ENCODE measurements at regions of chr20 and their contacts with region 1.

Region 1: GRCh38 chr20:32031007-32031958 is 20.8 kb upstream of the HCK start:
- DNase-seq: peak; percentile 82
- H3K4me3 Mint-ChIP-seq: no peak overlapping the region
- H3K27ac Mint-ChIP-seq: no peak overlapping the region
- H3K4me1 Mint-ChIP-seq: peaks cover 4% of the 10 kb centered on the region
- H3K27me3 Mint-ChIP-seq: peaks cover 46% of the 10 kb centered on the region
- CTCF ChIP-seq: peak; percentile 93

Region 2: DNA sequence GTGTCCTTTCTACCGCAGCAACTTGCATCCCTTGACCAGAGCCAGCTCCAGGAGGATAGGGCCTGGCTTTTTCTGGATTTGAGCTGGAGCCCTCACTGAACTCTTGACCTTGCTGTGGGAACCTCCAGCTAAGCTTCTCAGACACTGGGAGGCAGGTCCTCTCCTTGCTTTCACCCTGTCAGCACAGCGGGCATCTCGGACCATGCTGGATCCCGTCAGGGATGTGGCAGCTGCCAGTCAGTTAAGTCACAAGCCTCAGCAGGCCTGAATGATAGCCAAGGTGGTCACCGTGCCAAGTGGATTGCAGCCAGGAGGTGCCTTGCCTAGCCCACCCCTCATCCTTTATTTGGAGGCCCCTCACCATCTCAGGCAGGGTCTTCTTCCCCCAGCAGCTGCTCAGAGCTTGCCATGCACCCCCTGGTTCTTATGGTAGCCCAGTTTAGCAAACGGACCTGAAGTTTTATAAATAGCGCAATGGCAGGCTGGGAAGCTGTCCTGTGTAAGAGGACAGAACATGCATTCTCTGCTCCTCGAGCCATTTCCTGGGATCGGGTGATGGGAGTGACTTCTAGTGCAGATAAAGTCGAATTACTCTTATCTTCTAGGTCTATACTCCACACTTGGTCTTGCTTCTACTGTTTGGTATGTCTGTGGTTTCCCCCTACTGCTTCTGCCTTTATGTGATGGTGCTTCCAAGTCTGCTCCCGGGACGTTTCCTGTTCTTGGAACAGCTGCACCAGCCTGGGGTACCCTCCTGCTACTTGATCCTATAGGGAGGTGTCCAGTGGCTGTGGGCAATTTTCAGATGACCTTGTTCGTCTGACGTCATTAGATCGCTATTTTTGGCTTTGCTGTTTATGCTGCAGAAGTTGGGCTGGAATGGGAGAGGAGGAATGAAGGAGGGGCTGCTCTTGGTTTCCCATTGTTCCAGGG is 219.2 kb before region 1 on chr20:
- CTCF ChIA-PET with region 1: interaction called, 45 read pairs
- POLR2A ChIA-PET with region 1: no interaction called
- intact Hi-C with region 1: no loop called
- DNase-seq: no peak
- H3K4me3 Mint-ChIP-seq: no peak overlapping the region
- H3K27ac Mint-ChIP-seq: no peak overlapping the region
- H3K4me1 Mint-ChIP-seq: no peaks in the 10 kb centered on the region
- H3K27me3 Mint-ChIP-seq: no peaks in the 10 kb centered on the region
- CTCF ChIP-seq: no peak

Region 3: DNA sequence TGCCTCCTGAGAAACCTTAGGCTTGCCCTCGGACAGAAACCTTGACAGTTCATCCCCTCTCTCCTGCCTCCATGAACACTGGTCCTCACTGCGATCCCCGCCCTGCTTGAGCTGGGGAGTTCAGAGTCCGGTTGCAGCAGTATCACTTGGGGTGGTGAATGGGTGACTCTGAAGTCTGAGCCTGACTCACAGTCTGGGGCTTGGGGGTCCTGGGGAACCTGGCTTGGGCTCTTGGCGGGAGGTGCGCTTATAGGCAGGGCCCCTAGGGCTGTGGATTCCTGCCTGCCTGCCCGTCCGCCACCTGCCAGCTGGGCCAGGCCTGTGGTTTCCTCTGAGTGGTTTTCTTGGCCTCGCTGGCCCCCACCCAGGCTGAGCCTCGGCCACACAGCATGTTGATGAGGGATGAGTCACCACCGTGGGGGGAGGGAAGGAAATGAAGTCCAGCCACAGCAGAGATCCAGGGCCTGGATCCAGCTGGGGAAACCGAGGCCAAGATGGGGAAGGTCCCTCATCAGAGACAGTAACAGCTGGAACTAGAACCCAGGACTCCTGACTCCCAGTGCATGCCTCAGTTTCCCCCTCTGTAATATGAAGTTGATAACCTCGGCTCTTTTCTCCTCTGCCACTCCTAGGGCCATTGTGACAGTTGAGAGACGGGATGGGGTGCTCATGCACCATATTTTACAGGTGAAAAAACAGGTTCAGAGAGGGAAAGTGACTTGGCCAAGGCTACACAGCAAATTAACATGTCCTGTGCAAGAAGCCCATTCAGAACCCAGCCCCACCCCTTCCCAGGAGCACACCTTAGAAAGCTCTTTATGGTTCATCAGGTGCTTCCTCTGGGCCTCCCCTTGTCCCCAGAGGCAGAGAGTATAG is 195.1 kb before region 1 on chr20:
- CTCF ChIA-PET with region 1: interaction called, 25 read pairs
- POLR2A ChIA-PET with region 1: no interaction called
- intact Hi-C with region 1: no loop called
- DNase-seq: peak; percentile 93
- H3K4me3 Mint-ChIP-seq: no peak overlapping the region
- H3K27ac Mint-ChIP-seq: no peak overlapping the region
- H3K4me1 Mint-ChIP-seq: peaks cover 6% of the 10 kb centered on the region
- H3K27me3 Mint-ChIP-seq: no peaks in the 10 kb centered on the region
- CTCF ChIP-seq: no peak

Region 4: GRCh38 chr20:31869942-31870725 is 161.1 kb before region 1 on chr20 and contains the starts of genes DUSP15 and TTLL9:
- CTCF ChIA-PET with region 1: interaction called, 24 read pairs
- POLR2A ChIA-PET with region 1: no interaction called
- intact Hi-C with region 1: no loop called
- DNase-seq: no peak
- H3K4me3 Mint-ChIP-seq: peak within 1 kb of the TSS; percentile 77
- H3K27ac Mint-ChIP-seq: peak within 1 kb of the TSS; percentile 81
- H3K4me1 Mint-ChIP-seq: peaks cover 7% of the 10 kb centered on the region
- H3K27me3 Mint-ChIP-seq: peaks cover 67% of the 10 kb centered on the region
- CTCF ChIP-seq: no peak
- total RNA-seq, gene DUSP15: not detected in 2 replicates
- total RNA-seq, gene TTLL9: 0.19 TPM in 1 of 2 replicates, not detected in the other

Region 5: DNA sequence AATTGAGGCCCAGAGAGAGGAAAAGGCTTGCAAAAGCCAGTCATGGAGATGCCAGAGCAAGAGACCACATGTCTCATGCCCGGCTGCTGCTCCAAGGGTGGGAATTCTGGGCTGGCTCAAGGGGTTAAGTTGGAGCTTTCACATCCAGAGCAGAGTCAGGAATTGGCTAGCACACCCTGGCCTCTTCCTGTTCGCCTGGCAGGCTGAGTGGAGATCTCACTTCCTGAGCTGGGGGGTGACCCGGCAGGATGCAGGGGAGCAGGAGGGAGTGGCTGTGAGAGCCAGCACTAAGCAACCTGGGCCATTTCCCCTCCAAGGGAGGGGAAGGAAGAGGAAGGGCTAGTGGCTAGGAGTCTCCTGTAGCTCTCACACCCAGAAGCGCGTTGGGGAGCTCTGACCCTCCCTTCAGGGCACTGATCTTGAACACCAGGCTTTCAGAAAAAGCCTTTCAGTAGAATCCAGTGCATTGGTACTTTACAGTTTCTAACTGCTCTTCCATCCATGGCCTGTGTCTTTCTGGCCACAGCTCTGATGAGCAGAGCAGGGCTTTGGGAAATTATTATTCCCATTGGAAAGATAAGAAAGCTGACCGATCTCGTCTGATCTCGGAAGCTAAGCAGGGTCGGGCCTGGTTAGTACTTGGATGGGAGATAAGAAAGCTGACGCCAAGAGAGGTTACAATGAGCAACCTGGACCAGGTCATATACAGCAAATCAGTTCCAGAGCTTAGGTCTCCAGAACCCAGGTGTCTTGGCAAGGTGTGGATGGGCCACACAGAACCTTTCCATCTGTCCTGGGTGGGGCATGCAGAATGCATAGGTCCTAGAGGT is 23.3 kb before region 1 on chr20:
- CTCF ChIA-PET with region 1: interaction called, 13 read pairs
- POLR2A ChIA-PET with region 1: interaction called, 3 read pairs
- intact Hi-C with region 1: no loop called
- DNase-seq: no peak
- H3K4me3 Mint-ChIP-seq: no peak overlapping the region
- H3K27ac Mint-ChIP-seq: no peak overlapping the region
- H3K4me1 Mint-ChIP-seq: no peaks in the 10 kb centered on the region
- H3K27me3 Mint-ChIP-seq: peaks cover 31% of the 10 kb centered on the region
- CTCF ChIP-seq: no peak

Region 6: DNA sequence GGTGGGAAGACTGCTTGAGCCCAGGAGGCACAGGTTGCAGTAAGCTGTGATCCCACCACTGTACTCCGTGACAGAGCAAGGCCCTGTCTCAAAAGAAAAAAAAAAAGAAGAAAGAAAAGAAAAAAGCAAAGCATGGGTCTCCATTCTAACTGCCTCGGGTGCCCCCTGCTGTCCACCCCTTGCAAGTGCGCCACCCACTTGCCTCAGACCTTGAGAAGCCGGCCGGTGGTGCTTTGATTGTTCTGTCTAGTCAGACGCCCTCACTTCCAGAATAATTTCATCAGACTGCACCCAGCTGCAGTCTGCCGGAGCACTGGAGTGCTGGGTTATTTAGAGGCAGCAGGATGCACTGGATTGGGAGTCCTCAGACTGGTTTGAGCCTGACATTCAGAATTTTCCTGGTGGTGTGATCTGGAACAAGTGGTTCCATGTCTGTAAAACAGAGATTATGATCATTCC is 60.6 kb after region 1 on chr20:
- CTCF ChIA-PET with region 1: interaction called, 41 read pairs
- POLR2A ChIA-PET with region 1: no interaction called
- intact Hi-C with region 1: loop called (anchors 2 kb)
- DNase-seq: peak; percentile 77
- H3K4me3 Mint-ChIP-seq: no peak overlapping the region
- H3K27ac Mint-ChIP-seq: no peak overlapping the region
- H3K4me1 Mint-ChIP-seq: no peaks in the 10 kb centered on the region
- H3K27me3 Mint-ChIP-seq: peaks cover 40% of the 10 kb centered on the region
- CTCF ChIP-seq: peak; percentile 97

Region 7: GRCh38 chr20:32302507-32302872 is 271.2 kb after region 1 on chr20:
- CTCF ChIA-PET with region 1: no interaction called
- POLR2A ChIA-PET with region 1: no interaction called
- intact Hi-C with region 1: no loop called
- DNase-seq: no peak
- H3K4me3 Mint-ChIP-seq: no peak overlapping the region
- H3K27ac Mint-ChIP-seq: no peak overlapping the region
- H3K4me1 Mint-ChIP-seq: no peaks in the 10 kb centered on the region
- H3K27me3 Mint-ChIP-seq: no peaks in the 10 kb centered on the region
- CTCF ChIP-seq: no peak

Region 8: GRCh38 chr20:32652739-32653526 is 621.6 kb after region 1 on chr20:
- CTCF ChIA-PET with region 1: interaction called, 4 read pairs
- POLR2A ChIA-PET with region 1: no interaction called
- intact Hi-C with region 1: loop called (anchors 5 kb)
- DNase-seq: peak; percentile 84
- H3K4me3 Mint-ChIP-seq: no peak overlapping the region
- H3K27ac Mint-ChIP-seq: no peak overlapping the region
- H3K4me1 Mint-ChIP-seq: peaks cover 3% of the 10 kb centered on the region
- H3K27me3 Mint-ChIP-seq: no peaks in the 10 kb centered on the region
- CTCF ChIP-seq: peak; percentile 94

Region 9: GRCh38 chr20:33026072-33026778 is 994.9 kb after region 1 on chr20:
- CTCF ChIA-PET with region 1: no interaction called
- POLR2A ChIA-PET with region 1: no interaction called
- intact Hi-C with region 1: no loop called
- DNase-seq: no peak
- H3K4me3 Mint-ChIP-seq: no peak overlapping the region
- H3K27ac Mint-ChIP-seq: no peak overlapping the region
- H3K4me1 Mint-ChIP-seq: no peaks in the 10 kb centered on the region
- H3K27me3 Mint-ChIP-seq: no peaks in the 10 kb centered on the region
- CTCF ChIP-seq: no peak

Measured in MCF 10A (cell line).